Activated CD8-positive, alpha-beta memory T cell treated with anti-CD3 and anti-CD28 coated beads, Interleukin-2, amount 10 ng/mL, durations not matched to agents 7 days and 5 days (primary cell): ENCODE measurements at regions of chr13 and their contacts with region 1.

Region 1: GRCh38 chr13:52450012-52450792 is at the start of gene VPS36:
- DNase-seq: peak; percentile 95
- ATAC-seq: peak; percentile 83
- H3K4me3 Mint-ChIP-seq: peak within 1 kb of the TSS; percentile 87
- H3K27ac Mint-ChIP-seq: peak within 1 kb of the TSS; percentile 93
- H3K4me1 Mint-ChIP-seq: peaks cover 41% of the 10 kb centered on the region
- H3K27me3 Mint-ChIP-seq: peaks cover under 1% of the 10 kb centered on the region
- total RNA-seq, gene VPS36: 42.5 to 46.7 TPM

Region 2: DNA sequence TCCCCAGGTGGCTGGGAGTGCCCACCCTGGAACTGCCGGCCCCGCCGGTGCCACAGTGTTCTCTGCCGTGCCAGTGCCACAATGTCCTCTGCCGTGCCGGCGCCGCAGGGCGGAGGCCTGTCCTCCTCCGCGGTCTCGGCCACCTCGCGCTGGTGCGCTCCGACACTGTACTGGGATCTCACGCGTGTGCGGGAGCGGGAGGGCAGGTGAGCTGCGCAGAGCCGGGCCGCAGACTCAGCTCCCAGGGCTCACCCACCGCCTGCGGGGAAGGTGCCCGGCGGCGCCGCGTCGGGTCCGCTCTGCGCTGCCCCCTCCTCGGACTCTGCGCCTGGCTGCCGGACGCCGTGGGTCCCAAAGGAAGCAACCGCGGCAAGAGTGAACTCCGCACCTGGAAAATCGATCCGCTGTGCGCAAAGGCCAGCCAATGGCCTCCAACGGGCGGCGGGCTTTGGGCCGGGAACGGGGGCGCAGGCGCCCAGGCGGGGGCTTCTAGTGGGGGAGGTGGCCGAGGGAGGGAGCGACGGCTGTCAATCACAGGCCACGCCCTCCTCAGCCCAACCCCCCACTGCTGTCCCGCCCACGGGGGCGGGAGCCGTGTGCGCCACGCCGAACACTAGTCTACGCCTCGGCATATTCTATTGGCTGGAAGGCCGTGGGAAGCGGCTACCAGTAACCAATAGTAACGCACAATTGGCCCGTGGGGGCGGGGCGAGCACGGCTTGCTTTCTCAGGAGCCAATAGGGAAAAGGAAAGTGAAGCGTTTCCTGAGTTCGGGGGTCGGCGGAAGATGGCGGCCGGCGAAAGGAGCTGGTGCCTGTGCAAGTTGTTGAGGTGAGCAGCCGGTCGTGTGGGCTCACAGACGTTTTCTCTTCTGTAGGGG is 438.3 kb before region 1 on chr13 and contains the start of gene ALG11:
- CTCF ChIA-PET with region 1: interaction called, 11 read pairs
- DNase-seq: peak; percentile 99
- ATAC-seq: peak; percentile 99
- H3K4me3 Mint-ChIP-seq: peak within 1 kb of the TSS; percentile 100
- H3K27ac Mint-ChIP-seq: peak within 1 kb of the TSS; percentile 92
- H3K4me1 Mint-ChIP-seq: peaks cover 16% of the 10 kb centered on the region
- H3K27me3 Mint-ChIP-seq: peaks cover 34% of the 10 kb centered on the region
- total RNA-seq, gene ALG11: 23.9 to 28.9 TPM

Region 3: DNA sequence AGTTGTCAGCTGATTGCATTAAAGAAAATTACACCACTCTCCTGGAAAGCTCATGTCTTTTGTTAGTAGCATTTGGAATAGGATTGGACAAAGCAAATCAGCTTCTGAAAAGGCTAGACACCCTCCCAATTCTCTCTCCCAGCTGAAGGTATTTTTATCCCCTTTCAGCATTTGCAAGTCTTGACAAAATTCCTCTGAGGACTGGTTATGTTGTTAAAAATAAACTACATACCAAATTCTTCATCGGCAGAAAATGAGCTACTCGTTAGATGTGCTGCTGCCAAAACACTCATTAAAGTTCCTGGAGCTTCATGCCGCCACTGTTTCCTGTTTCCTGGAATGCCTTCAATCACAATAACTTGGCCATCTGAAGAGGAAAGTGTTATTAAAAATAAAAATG is 388.6 kb before region 1 on chr13:
- CTCF ChIA-PET with region 1: no interaction called
- DNase-seq: no peak
- ATAC-seq: no peak
- H3K4me3 Mint-ChIP-seq: no peak overlapping the region
- H3K27ac Mint-ChIP-seq: no peak overlapping the region
- H3K4me1 Mint-ChIP-seq: no peaks in the 10 kb centered on the region
- H3K27me3 Mint-ChIP-seq: no peaks in the 10 kb centered on the region

Region 4: DNA sequence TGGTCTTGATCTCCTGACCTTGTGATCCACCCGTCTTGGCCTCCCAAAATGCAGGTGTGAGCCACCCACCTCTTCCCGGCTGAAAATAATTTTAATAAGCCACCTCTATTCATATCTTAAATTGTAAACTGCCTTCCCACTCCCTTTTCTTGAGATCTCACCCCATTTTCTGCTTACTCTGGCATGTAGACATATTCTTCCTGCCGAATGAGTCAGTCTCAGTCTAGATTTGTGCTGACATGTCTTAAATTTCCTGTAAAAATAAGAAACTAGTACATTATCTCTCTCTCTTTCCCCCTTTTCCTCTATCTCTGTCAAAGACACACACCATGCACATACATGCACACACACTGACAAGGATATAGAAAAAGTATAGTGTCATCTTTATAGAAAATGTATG is 105.2 kb before region 1 on chr13:
- CTCF ChIA-PET with region 1: interaction called, 21 read pairs
- DNase-seq: no peak
- ATAC-seq: no peak
- H3K4me3 Mint-ChIP-seq: no peak overlapping the region
- H3K27ac Mint-ChIP-seq: no peak overlapping the region
- H3K4me1 Mint-ChIP-seq: peaks cover 7% of the 10 kb centered on the region
- H3K27me3 Mint-ChIP-seq: peaks cover 19% of the 10 kb centered on the region

Region 5: GRCh38 chr13:52428295-52428694 is 21.9 kb before region 1 on chr13:
- CTCF ChIA-PET with region 1: interaction called, 11 read pairs
- DNase-seq: no peak
- ATAC-seq: no peak
- H3K4me3 Mint-ChIP-seq: no peak overlapping the region
- H3K27ac Mint-ChIP-seq: no peak overlapping the region
- H3K4me1 Mint-ChIP-seq: no peaks in the 10 kb centered on the region
- H3K27me3 Mint-ChIP-seq: no peaks in the 10 kb centered on the region

Region 6: DNA sequence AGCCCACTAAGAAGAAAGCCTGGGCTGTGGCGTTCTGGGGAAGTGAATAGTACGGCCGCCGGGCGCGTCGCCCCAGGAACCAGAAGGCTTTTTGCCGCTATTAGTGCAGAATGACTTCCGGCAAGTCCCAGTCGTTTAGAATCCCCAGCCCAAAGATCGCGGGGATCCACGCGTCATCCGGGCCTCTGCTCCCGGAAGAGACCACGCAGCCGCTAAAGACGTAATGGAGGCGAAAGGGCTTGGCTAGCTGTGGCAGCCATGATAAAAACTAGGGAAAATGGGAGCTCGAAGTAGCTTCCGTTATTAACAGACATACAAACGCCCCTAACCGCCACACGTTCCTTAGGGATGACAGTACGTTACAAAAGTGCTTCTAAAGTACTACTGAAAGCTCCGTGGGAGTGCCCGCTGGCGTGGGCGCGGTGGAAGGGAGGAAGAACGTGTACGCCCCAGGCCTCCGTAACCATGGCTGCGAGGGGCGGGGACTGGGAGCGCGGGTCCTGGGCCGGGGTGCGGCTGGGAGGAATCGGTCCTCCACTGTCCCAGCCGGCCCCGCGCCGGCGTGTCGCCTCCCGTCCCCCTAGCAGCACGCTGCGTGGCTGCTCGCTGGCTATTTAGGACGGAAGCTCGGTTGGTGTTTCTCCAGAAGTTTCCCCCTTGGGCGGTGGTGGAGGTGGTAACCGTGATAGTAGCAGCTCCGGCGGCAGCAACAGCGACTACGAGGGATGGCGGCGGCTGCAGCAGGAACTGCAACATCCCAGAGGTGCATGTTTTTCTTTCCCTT is 202.2 kb after region 1 on chr13 and contains the start of gene SUGT1:
- CTCF ChIA-PET with region 1: interaction called, 11 read pairs
- DNase-seq: peak; percentile 98
- ATAC-seq: peak; percentile 95
- H3K4me3 Mint-ChIP-seq: no peak within 1 kb of the TSS
- H3K27ac Mint-ChIP-seq: no peak within 1 kb of the TSS
- H3K4me1 Mint-ChIP-seq: peaks cover 7% of the 10 kb centered on the region
- H3K27me3 Mint-ChIP-seq: no peaks in the 10 kb centered on the region
- total RNA-seq, gene SUGT1: 42.8 to 51.8 TPM

Region 7: GRCh38 chr13:52665325-52665724 is 215.1 kb after region 1 on chr13:
- CTCF ChIA-PET with region 1: no interaction called
- DNase-seq: no peak
- ATAC-seq: peak; percentile 60
- H3K4me3 Mint-ChIP-seq: no peak overlapping the region
- H3K27ac Mint-ChIP-seq: no peak overlapping the region
- H3K4me1 Mint-ChIP-seq: peaks cover 3% of the 10 kb centered on the region
- H3K27me3 Mint-ChIP-seq: no peaks in the 10 kb centered on the region